Prostate gland (tissue), 2 donors: ENCODE measurements at regions of chr7 and their contacts with region 1.

Region 1: GRCh38 chr7:16564909-16565426 is 38.3 kb downstream of the LRRC72 start:
- DNase-seq: no peak
- H3K4me3 ChIP-seq: no peak overlapping the region
- H3K27ac ChIP-seq: no peak overlapping the region
- H3K4me1 ChIP-seq: no peaks in the 10 kb centered on the region
- H3K27me3 ChIP-seq: no peaks in the 10 kb centered on the region
- CTCF ChIP-seq: peak; percentile 51 to 81 (median 76)
- POLR2A ChIP-seq: no peak

Region 2: DNA sequence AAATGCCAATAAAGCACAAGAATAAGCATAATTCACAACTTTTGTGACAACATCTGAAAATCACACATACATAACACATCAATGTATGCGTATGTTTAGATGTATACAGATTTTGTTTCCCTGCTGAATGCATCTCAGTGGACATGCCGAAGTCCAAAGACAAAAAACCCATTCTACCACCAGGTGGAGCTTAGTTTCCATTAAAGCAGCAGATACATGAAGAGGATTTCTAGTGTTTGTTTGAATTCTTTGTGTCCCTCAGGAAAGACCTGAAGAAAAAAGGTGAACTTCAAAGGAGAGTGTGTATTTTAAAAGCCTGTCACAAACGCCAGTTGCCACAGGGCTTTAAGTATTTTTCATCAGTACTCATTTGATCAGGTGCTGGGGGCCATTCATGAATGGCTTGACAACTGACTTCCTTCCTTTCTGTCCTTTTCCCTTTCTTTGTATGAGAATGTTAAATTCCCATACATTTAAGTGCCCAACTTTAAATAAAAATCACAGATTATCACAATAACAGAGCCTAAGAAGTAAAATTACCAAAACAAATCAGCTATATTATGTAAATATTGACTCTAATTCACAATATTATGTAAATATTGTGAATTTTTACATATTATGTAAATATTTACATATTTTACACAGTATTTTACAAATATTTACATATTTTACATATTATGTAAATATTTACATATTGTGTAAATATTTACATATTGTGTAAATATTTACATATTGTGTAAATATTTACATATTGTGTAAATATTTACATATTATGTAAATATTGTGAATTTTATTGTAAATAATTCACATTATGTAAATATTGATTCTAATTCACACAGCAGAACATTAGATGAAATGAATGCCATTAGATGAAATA is 486.7 kb before region 1 on chr7:
- intact Hi-C with region 1: loop called (anchors 2 kb)
- DNase-seq: peak; percentile 45
- H3K4me3 ChIP-seq: no peak overlapping the region
- H3K27ac ChIP-seq: no peak overlapping the region
- H3K4me1 ChIP-seq: no peaks in the 10 kb centered on the region
- H3K27me3 ChIP-seq: no peaks in the 10 kb centered on the region
- CTCF ChIP-seq: peak in 3 of 4 experiments; percentile 67 to 74 (median 69)
- POLR2A ChIP-seq: no peak

Region 3: DNA sequence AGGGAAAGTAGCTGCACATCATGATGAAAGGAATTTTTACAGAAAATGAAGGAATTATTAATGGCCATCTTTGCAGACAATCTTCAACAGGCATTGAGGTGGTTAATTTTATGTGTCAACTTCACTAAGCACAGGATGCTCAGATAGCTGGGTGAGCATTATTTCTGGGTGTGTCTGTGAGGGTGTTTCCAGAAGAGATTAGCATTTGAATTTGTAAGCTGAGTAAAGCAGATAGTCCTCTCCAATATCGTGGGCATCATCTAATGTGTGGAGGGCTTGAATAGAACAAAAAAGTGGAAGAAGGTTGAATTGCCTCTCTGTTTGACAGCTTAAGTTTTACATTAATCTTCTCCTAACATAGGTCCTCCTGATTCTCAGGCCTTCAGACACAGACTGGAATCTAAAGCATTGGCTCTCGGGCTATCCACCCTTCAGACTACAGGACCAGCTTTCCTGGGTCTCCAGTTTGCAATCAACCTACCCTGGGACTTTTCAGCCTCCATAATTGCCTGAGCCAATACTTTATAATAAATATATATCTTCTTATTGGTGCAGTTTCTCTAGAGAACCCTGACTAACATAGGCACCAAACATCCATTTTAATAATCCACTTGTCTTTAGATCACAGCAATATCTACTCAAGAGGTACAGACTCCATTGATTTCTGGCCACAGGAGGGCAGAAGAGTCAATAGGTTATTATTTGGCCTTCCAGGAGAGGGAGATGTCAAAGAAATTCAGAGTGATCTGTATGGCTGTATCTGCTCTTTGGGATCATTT is 133.1 kb before region 1 on chr7:
- intact Hi-C with region 1: loop called (anchors 10 kb)
- DNase-seq: peak; percentile 15
- H3K4me3 ChIP-seq: no peak overlapping the region
- H3K27ac ChIP-seq: no peak overlapping the region
- H3K4me1 ChIP-seq: no peaks in the 10 kb centered on the region
- H3K27me3 ChIP-seq: no peaks in the 10 kb centered on the region
- CTCF ChIP-seq: peak; percentile 12 to 57 (median 44)
- POLR2A ChIP-seq: no peak